Right ventricle myocardium inferior (tissue), 1 donor: ENCODE measurements at regions of chr4 and their contacts with region 1.

Region 1: GRCh38 chr4:86497980-86498862 is 95.9 kb upstream of the PTPN13 start:
- DNase-seq: no peak
- ATAC-seq: peak; percentile 76

Region 2: GRCh38 chr4:86895692-86896488 is 397.7 kb after region 1 on chr4:
- intact Hi-C with region 1: loop called (anchors 1 kb)
- DNase-seq: no peak
- ATAC-seq: peak; percentile 40